Endothelial cell of umbilical vein (primary cell): ENCODE measurements at regions of chr1 and their contacts with region 1.

Region 1: DNA sequence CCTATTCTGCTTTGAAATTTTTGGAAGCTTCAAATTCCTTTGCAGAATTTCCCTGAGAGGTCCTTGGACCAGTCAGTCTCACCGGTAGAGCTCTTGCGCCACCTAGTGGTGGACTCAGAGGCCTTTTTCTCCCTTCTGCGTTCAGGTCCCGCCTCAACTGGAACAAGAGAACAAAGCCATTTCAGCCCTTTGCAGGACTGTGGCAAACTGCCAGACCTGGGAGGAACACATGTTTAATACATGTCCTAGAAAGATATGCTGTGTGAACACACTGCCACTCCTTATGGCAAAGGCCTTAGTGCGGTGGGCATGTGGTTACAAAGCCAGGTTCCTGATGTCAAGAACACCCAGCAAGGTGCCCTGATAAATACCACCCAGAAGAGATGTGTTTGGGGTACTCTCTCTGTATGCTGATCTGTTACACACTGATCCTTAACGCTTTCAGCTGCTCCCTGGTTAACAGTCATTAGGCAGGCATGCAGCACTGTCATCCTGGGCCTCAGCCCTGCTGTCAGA is 82.2 kb upstream of the SSX2IP start:
- DNase-seq: peak; percentile 74
- H3K4me3 ChIP-seq: no peak overlapping the region
- H3K27ac ChIP-seq: no peak overlapping the region
- H3K4me1 ChIP-seq: no peaks in the 10 kb centered on the region
- H3K27me3 ChIP-seq: peaks cover 2 to 12% of the 10 kb centered on the region in 2 experiments
- CTCF ChIP-seq: peak; percentile 83 to 87
- POLR2A ChIP-seq: no peak

Region 2: DNA sequence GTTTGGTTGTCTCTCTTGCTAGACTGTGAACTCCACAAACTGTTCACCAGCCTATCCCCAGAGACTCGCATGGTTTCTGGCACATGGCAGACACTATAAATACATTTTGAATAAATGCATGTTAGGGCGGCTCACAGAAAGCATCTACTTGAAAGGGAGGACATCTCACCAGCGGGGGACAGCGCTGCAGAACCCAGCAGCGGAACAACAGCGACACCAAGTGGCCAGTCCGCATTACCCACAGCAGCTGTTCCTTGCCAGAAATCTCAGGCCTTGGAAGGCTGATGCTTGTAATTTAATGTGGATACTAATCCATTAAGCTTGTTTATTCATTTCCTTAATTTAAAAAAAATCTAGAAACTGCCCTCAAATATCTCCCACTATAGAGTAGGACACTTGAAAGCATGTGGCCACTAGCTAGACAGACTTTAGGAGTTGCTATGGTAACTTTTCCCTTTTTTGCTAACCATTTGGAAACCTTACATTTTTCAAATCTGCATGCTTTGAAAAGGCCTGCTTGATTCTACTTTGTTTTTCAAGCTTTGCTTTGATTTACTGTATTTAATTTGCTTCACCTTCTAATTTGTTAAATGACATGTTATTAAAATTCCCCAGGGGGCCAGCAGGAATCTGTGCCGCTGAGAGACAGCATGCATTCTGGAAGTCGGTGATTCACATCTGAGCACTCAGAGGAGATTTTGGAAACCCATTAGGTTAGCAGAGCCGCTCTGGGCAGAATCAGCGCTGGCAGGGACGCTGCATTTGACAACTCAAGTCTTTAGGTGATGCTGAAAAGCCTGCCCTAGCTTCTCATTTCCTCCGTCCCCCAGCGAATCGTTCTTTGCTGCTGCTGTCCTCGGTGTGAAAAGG is 18.7 kb before region 1 on chr1:
- CTCF ChIA-PET with region 1: interaction called, 20 read pairs
- POLR2A ChIA-PET with region 1: no interaction called
- dilution Hi-C with region 1: no loop called
- intact Hi-C with region 1: no loop called
- DNase-seq: peak; percentile 71
- H3K4me3 ChIP-seq: no peak overlapping the region
- H3K27ac ChIP-seq: no peak overlapping the region
- H3K4me1 ChIP-seq: no peaks in the 10 kb centered on the region
- H3K27me3 ChIP-seq: peaks cover 8 to 12% of the 10 kb centered on the region in 2 experiments
- CTCF ChIP-seq: peak; percentile 90 to 93
- POLR2A ChIP-seq: no peak

Region 3: GRCh38 chr1:84758968-84759491 is 13.5 kb before region 1 on chr1:
- CTCF ChIA-PET with region 1: interaction called, 20 read pairs
- POLR2A ChIA-PET with region 1: no interaction called
- dilution Hi-C with region 1: no loop called
- intact Hi-C with region 1: no loop called
- DNase-seq: no peak
- H3K4me3 ChIP-seq: no peak overlapping the region
- H3K27ac ChIP-seq: no peak overlapping the region
- H3K4me1 ChIP-seq: no peaks in the 10 kb centered on the region
- H3K27me3 ChIP-seq: peaks cover 14 to 15% of the 10 kb centered on the region in 2 experiments
- CTCF ChIP-seq: no peak
- POLR2A ChIP-seq: no peak

Region 4: DNA sequence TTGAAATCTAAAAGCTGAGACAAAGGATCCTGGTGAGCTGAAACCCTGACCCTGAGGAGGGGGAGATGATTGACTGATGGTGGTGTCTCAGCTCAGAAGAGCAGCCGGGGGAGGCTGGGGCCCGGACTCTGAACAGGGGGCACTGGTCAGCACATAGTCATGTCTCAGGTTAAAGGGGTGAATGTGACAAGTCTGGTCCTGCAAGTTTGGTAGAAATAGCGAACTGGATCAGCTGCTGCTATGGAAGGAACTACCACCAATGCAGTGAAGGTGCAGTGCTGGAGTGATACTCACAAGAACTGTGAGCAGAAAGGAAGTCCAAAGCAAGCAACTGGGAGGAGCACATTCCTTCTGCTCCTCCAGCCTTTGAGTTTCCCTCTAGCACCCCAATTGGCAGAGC is 16.5 kb after region 1 on chr1:
- CTCF ChIA-PET with region 1: interaction called, 10 read pairs
- POLR2A ChIA-PET with region 1: no interaction called
- dilution Hi-C with region 1: no loop called
- intact Hi-C with region 1: no loop called
- DNase-seq: no peak
- H3K4me3 ChIP-seq: no peak overlapping the region
- H3K27ac ChIP-seq: no peak overlapping the region
- H3K4me1 ChIP-seq: no peaks in the 10 kb centered on the region
- H3K27me3 ChIP-seq: peaks cover 8 to 20% of the 10 kb centered on the region in 2 experiments
- CTCF ChIP-seq: no peak
- POLR2A ChIP-seq: no peak